ENCODE measurements at regions of chr15 and their contacts with region 1.

Region 1: DNA sequence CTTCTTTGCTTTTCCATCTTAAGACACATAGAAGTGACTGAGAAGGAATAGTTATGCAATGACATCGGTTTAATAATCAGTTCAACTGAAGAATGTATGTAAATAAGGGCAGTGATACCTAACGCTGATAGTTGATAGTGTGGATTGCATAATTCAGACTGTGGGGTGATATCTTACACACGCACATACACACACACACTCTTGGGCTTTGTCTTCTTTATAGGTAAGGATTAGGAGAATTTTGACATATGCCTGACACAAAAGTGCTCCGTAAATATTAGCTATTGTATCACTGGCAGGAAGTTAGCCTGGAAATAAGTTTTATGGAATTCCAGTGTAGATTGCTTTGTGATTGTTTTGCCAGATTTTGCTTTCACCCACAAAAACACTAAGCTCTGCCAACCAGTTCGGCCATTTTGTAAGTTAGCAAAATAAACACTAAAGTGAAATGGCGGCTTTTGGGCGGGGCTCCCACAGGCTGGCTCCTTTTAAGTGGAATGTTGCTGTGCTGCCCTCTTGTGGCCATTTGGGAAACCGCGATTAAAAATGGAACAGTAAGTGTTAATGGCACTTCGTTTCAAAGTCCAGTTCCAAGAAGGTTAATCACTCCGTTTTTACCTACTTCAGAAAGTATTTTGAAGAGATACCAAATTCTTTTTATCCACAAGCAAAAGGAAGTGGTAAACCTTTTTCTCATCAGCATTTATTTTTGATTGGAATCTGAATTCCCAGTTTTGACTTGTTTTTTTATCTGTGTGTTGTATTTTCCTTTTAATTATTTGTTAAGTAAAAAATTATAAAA is 17.7 kb downstream of the CHD2 start:
- DNase-seq: peak; percentile 74 to 91 (median 89)
- ATAC-seq: peak; percentile 78
- H3K4me3 ChIP-seq: peak overlapping the region; percentile 5
- H3K4me3 Mint-ChIP-seq: peak overlapping the region; percentile 43 to 81 (median 70)
- H3K27ac ChIP-seq: peak overlapping the region; percentile 92
- H3K27ac Mint-ChIP-seq: peak overlapping the region; percentile 82 to 100 (median 96)
- H3K4me1 ChIP-seq: peaks cover 64 to 76% of the 10 kb centered on the region in 2 donors
- H3K4me1 Mint-ChIP-seq: peaks cover 53 to 92% (median 86%) of the 10 kb centered on the region in 7 donors
- H3K27me3 ChIP-seq: no peaks in the 10 kb centered on the region
- H3K27me3 Mint-ChIP-seq: no peaks in the 10 kb centered on the region

Region 2: GRCh38 chr15:91445758-91446157 is 1472.0 kb before region 1 on chr15:
- CTCF ChIA-PET with region 1: no interaction called
- POLR2A ChIA-PET with region 1: no interaction called
- intact Hi-C with region 1: no loop called
- DNase-seq: no peak
- ATAC-seq: no peak
- H3K4me3 ChIP-seq: no peak overlapping the region
- H3K4me3 Mint-ChIP-seq: no peak overlapping the region
- H3K27ac ChIP-seq: no peak overlapping the region
- H3K27ac Mint-ChIP-seq: no peak overlapping the region
- H3K4me1 ChIP-seq: peaks cover 0 to 10% of the 10 kb centered on the region in 2 donors
- H3K4me1 Mint-ChIP-seq: peaks cover 0 to 22% (median 15%) of the 10 kb centered on the region in 7 donors
- H3K27me3 ChIP-seq: no peaks in the 10 kb centered on the region
- H3K27me3 Mint-ChIP-seq: peaks cover 0 to 31% (median 0%) of the 10 kb centered on the region in 5 donors

Region 3: GRCh38 chr15:92803847-92804609 is 113.8 kb before region 1 on chr15:
- CTCF ChIA-PET with region 1: interaction called, 70 read pairs
- POLR2A ChIA-PET with region 1: interaction called, 184 read pairs
- intact Hi-C with region 1: loop called (anchors 1 kb)
- DNase-seq: peak in 1 of 9 donors; percentile 85
- ATAC-seq: peak; percentile 85
- H3K4me3 ChIP-seq: no peak overlapping the region
- H3K4me3 Mint-ChIP-seq: peak overlapping the region in 2 of 10 donors; percentile 44 to 49
- H3K27ac ChIP-seq: no peak overlapping the region
- H3K27ac Mint-ChIP-seq: peak overlapping the region in 7 of 9 donors; percentile 2 to 89 (median 50)
- H3K4me1 ChIP-seq: peaks cover 0 to 7% of the 10 kb centered on the region in 2 donors
- H3K4me1 Mint-ChIP-seq: peaks cover 14 to 53% (median 25%) of the 10 kb centered on the region in 7 donors
- H3K27me3 ChIP-seq: no peaks in the 10 kb centered on the region
- H3K27me3 Mint-ChIP-seq: peaks cover 0 to 1% (median 0%) of the 10 kb centered on the region in 5 donors

Region 4: GRCh38 chr15:92831655-92832328 is 86.0 kb before region 1 on chr15:
- CTCF ChIA-PET with region 1: interaction called, 3 read pairs
- POLR2A ChIA-PET with region 1: interaction called, 47 read pairs
- intact Hi-C with region 1: loop called in 1 of 2 experiments (anchors 1 kb)
- DNase-seq: peak; percentile 53 to 98 (median 86)
- ATAC-seq: peak; percentile 94
- H3K4me3 ChIP-seq: peak overlapping the region; percentile 21
- H3K4me3 Mint-ChIP-seq: peak overlapping the region; percentile 74 to 91 (median 81)
- H3K27ac ChIP-seq: peak overlapping the region; percentile 81
- H3K27ac Mint-ChIP-seq: peak overlapping the region; percentile 92 to 98 (median 97)
- H3K4me1 ChIP-seq: peaks cover 31 to 53% of the 10 kb centered on the region in 2 donors
- H3K4me1 Mint-ChIP-seq: peaks cover 26 to 61% (median 50%) of the 10 kb centered on the region in 7 donors
- H3K27me3 ChIP-seq: no peaks in the 10 kb centered on the region
- H3K27me3 Mint-ChIP-seq: no peaks in the 10 kb centered on the region

Region 5: GRCh38 chr15:92881802-92882696 is 35.8 kb before region 1 on chr15:
- CTCF ChIA-PET with region 1: interaction called, 7 read pairs
- POLR2A ChIA-PET with region 1: interaction called, 216 read pairs
- intact Hi-C with region 1: loop called (anchors 1 kb)
- DNase-seq: peak; percentile 95 to 100 (median 99)
- ATAC-seq: peak; percentile 93
- H3K4me3 ChIP-seq: peak overlapping the region; percentile 61
- H3K4me3 Mint-ChIP-seq: peak overlapping the region; percentile 86 to 97 (median 91)
- H3K27ac ChIP-seq: peak overlapping the region; percentile 79
- H3K27ac Mint-ChIP-seq: peak overlapping the region; percentile 97 to 100 (median 99)
- H3K4me1 ChIP-seq: peaks cover 42 to 45% of the 10 kb centered on the region in 2 donors
- H3K4me1 Mint-ChIP-seq: peaks cover 40 to 72% (median 60%) of the 10 kb centered on the region in 7 donors
- H3K27me3 ChIP-seq: no peaks in the 10 kb centered on the region
- H3K27me3 Mint-ChIP-seq: peaks cover 0 to 2% (median 0%) of the 10 kb centered on the region in 5 donors

Region 6: GRCh38 chr15:92903941-92904831 is 13.6 kb before region 1 on chr15:
- CTCF ChIA-PET with region 1: interaction called, 35 read pairs
- POLR2A ChIA-PET with region 1: interaction called, 342 read pairs
- intact Hi-C with region 1: loop called (anchors 1 kb)
- DNase-seq: peak; percentile 99
- ATAC-seq: peak; percentile 90
- H3K4me3 ChIP-seq: peak overlapping the region; percentile 79
- H3K4me3 Mint-ChIP-seq: peak overlapping the region; percentile 81 to 100 (median 94)
- H3K27ac ChIP-seq: peak overlapping the region; percentile 97
- H3K27ac Mint-ChIP-seq: peak overlapping the region; percentile 96 to 100 (median 100)
- H3K4me1 ChIP-seq: peaks cover 48 to 54% of the 10 kb centered on the region in 2 donors
- H3K4me1 Mint-ChIP-seq: peaks cover 39 to 71% (median 64%) of the 10 kb centered on the region in 7 donors
- H3K27me3 ChIP-seq: no peaks in the 10 kb centered on the region
- H3K27me3 Mint-ChIP-seq: no peaks in the 10 kb centered on the region

Region 7: DNA sequence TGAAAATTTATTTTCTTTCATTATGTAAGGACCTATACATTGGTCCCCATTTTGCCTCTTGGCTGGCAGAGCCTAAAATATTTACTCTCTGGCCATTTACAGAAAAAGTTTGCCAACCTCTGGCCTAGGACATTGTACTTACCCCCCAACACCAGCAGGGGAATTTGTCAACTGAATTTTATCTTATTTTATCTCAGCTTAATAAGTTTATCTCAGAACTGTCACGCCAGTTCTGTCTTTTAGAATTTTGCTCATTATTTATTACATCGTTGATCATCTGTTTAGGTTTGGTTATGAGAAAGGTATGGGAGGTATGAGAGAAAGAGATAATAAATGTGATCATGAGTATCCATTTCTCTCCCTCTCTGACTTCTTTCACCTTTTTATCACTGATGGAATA is 20.6 kb after region 1 on chr15:
- CTCF ChIA-PET with region 1: interaction called, 3 read pairs
- POLR2A ChIA-PET with region 1: interaction called, 7 read pairs
- intact Hi-C with region 1: loop called (anchors 2 kb)
- DNase-seq: no peak
- ATAC-seq: no peak
- H3K4me3 ChIP-seq: no peak overlapping the region
- H3K4me3 Mint-ChIP-seq: no peak overlapping the region
- H3K27ac ChIP-seq: no peak overlapping the region
- H3K27ac Mint-ChIP-seq: peak overlapping the region in 5 of 9 donors; percentile 65 to 90 (median 66)
- H3K4me1 ChIP-seq: peaks cover 0 to 22% of the 10 kb centered on the region in 2 donors
- H3K4me1 Mint-ChIP-seq: peaks cover 20 to 66% (median 60%) of the 10 kb centered on the region in 7 donors
- H3K27me3 ChIP-seq: no peaks in the 10 kb centered on the region
- H3K27me3 Mint-ChIP-seq: no peaks in the 10 kb centered on the region

Measured in naive thymus-derived CD4-positive, alpha-beta T cell (primary cell).